ENCODE measurements at regions of chr19 and their contacts with region 1.

Region 1: DNA sequence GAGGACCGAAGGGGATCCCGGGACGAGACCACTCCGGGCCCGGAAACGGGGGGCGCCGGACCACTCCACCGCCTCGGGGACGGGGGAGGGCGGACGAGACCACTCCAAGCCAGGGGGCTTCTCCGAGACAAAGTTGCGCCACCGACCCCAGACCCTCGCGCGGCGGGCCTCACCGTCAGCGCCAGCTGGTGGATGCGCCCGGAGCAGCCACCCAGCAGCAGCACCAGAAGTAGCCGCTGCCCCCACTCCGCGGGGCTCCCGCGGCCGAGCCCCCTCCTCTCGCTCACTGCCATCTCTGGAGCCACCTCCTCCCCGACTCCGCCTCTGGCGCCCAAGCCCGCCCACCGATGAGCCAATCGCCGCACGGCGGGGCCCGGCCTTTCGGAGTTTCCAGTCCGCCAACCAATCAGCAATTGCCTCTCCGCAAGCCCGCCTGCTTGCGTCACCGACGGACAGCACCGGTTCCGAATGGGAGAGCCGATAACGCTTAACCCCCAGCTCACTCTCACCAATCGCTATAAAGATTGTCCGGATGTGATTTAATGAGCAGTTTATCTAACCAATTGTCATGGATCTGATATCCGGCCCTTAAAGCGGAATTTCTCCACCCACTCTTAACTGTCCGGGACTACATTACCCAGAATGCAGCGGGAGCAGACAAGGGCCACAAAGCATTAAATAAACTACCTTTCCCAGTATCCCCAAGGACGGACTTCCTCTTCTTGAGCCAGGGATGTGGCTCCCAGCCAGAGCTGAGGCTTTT is at the start of gene GPR108:
- H3K4me3 Mint-ChIP-seq: peak within 1 kb of the TSS; percentile 94
- H3K27ac Mint-ChIP-seq: peak within 1 kb of the TSS; percentile 91
- H3K4me1 Mint-ChIP-seq: peaks cover 37% of the 10 kb centered on the region
- H3K27me3 Mint-ChIP-seq: peaks cover 2% of the 10 kb centered on the region

Region 2: GRCh38 chr19:6516659-6517291 is 220.7 kb before region 1 on chr19:
- intact Hi-C with region 1: loop called (anchors 2 kb)
- H3K4me3 Mint-ChIP-seq: peak overlapping the region; percentile 87
- H3K27ac Mint-ChIP-seq: peak overlapping the region; percentile 85
- H3K4me1 Mint-ChIP-seq: peaks cover 39% of the 10 kb centered on the region
- H3K27me3 Mint-ChIP-seq: peaks cover 35% of the 10 kb centered on the region

Region 3: DNA sequence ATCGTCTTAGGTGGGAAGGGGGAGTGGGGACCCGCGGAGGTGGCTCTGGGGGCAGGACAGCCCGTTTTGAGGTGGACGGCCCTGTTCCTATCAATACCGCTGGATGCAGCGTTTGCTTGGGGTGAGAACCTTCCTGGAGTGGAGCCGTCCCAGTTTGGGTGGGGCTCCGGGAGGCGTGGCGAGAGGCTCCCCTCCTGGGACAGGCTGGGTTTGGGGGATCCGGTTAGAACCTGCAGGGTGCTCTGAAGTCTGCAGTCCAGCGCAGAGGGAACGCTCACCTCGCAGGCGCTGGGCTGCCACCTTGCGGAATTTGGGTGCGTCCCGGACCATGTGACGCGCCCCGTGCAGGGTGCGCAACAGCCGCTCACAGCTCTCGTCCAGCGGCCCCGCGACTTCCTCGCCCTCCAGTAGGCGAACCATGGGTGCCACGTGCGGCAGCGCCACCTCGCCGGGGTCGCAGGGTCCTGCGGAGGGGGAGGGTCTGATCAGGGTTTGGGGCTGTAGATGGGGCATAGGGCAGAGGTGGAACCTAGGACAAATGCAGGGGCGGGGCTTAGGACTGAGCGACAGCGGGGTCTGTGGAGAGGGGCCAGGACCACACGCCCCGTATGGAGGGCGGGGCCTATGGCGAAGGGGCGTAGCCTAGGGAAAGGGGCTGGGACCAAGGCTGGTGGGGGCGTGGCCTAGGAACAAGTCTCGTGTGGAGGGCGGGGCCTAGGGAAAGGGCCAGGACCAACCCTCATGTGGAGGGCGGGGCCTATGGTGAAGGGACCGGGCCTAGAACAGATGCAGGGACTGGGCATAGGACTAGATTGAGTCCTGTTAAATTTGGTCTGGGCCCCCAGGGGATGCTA is 15.9 kb after region 1 on chr19:
- intact Hi-C with region 1: loop called (anchors 2 kb)
- H3K4me3 Mint-ChIP-seq: peak overlapping the region; percentile 89
- H3K27ac Mint-ChIP-seq: peak overlapping the region; percentile 89
- H3K4me1 Mint-ChIP-seq: peaks cover 28% of the 10 kb centered on the region
- H3K27me3 Mint-ChIP-seq: peaks cover 19% of the 10 kb centered on the region

Region 4: DNA sequence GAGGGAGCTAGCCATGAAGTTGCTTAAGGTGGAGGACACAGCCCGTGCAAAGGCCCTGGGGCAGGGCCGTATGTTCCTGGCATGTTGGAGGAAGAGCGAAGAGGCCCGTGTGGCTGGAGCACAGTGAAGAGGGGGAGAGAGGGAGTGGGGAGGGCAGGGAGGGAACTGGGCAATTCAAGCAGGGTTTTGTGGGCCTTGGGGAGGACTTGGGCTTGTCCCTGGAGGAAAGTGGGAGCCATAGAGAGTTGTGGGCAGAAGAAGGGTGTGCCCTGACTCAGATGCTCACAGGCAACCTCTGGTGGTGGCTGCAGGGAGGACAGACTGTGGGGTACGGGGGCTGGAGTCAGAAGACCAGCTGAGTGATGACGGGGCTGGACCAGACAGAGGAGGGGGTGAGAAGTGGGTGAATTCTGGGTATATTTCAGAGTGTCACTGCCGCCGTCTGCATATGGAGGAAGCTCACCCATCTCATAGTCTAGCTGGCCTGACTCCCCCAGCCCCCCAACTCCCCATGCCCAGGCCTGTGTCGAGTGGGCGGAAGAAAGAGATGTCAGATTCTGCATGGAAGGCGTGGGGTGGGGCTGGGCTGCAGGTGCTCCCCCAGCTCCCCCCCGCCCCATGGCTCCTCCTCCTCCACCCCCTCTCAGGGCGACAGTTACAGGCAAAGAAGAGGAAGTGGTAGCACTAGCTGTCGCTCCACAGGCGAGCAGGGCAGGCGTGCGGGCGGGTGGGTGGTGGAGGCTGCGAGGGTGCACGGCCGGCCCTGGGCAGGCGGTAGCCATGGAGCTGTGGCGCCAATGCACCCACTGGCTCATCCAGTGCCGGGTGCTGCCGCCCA is 34.8 kb after region 1 on chr19 and contains the start of gene VAV1:
- intact Hi-C with region 1: loop called (anchors 2 kb)
- H3K4me3 Mint-ChIP-seq: peak within 1 kb of the TSS; percentile 85
- H3K27ac Mint-ChIP-seq: peak within 1 kb of the TSS; percentile 80
- H3K4me1 Mint-ChIP-seq: peaks cover 69% of the 10 kb centered on the region
- H3K27me3 Mint-ChIP-seq: peaks cover 4% of the 10 kb centered on the region

Region 5: DNA sequence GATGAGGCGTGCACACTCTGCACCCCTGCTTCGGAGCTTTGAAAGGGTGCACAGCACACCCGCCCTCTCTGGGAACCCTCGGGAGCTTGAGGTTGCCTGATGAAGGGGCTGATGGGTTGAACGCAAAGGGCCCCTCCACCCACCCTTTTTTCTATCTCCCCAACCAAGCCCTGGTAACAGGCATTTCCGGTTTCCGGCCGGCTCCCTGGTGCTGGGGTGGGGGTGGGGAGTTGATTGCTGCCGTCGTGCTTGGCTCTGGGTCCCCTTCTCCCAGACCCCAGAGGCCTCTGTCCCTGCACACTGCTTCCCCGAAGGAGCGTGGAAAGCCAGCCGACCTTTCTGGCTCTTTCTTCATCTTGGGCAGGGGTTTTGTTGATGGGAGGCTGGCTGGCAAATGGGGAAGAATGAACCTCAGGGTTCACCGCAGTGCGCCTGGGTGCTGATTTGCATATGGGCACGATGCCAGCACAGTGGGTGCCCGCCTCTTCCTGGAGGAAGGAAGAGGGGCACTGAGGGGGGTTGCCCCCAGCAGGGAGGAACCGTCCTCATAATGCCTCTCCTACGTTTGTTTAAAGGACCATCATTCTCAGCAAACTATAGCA is 64.1 kb after region 1 on chr19:
- intact Hi-C with region 1: loop called (anchors 2 kb)
- H3K4me3 Mint-ChIP-seq: peak overlapping the region; percentile 78
- H3K27ac Mint-ChIP-seq: peak overlapping the region; percentile 96
- H3K4me1 Mint-ChIP-seq: peaks cover 81% of the 10 kb centered on the region
- H3K27me3 Mint-ChIP-seq: no peaks in the 10 kb centered on the region